PC-9 (cell line): ENCODE measurements at regions of chr2 and their contacts with region 1.

Region 1: DNA sequence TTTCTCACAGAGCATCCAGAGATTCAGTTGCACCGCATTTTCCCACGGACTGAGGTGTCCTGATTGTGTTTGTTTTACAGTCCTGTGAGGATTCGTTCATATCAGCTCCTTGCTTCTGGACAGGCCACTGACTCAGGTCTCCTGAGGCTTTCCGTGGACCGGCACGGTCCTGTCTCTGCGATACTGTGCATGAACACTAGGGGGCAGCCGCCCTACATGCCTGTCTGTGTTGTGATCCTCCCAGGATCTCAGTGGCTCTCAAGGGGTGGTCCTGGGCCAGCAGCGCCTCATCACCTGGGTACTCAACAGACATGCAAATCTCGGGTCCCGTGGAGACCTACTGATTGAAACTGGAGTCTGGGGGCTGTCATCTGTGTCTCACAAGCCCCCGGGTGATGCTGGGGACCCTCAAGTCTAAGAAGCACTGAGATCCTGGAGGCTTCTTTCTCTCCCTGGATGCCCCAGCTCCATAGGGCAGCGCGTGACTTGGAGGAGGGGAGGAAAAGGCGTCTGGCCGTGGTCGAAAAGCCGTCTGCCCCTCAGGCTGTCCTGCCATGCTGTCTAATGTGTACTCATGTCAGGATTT is 28.9 kb downstream of the IL1R2 start:
- DNase-seq: peak; percentile 53 to 77
- H3K4me3 ChIP-seq: no peak overlapping the region
- H3K27ac ChIP-seq: no peak overlapping the region
- H3K4me1 ChIP-seq: 0 out of 2 replicates have a peak, but pooled peaks cover 4% of the 10 kb centered on the region
- H3K27me3 ChIP-seq: no peaks in the 10 kb centered on the region
- CTCF ChIP-seq: peak; percentile 98

Region 2: GRCh38 chr2:100427628-100428258 is 1592.9 kb before region 1 on chr2:
- CTCF ChIA-PET with region 1: no interaction called
- POLR2A ChIA-PET with region 1: no interaction called
- intact Hi-C with region 1: no loop called
- DNase-seq: peak in 1 of 2 experiments; percentile 38
- H3K4me3 ChIP-seq: no peak overlapping the region
- H3K27ac ChIP-seq: no peak overlapping the region
- H3K4me1 ChIP-seq: no peaks in the 10 kb centered on the region
- H3K27me3 ChIP-seq: peaks cover 41% of the 10 kb centered on the region; the same call in 1 of the 2 replicates
- CTCF ChIP-seq: peak; percentile 74

Region 3: GRCh38 chr2:101793277-101793969 is 227.3 kb before region 1 on chr2:
- CTCF ChIA-PET with region 1: no interaction called
- POLR2A ChIA-PET with region 1: no interaction called
- intact Hi-C with region 1: no loop called
- DNase-seq: no peak
- H3K4me3 ChIP-seq: no peak overlapping the region
- H3K27ac ChIP-seq: no peak overlapping the region
- H3K4me1 ChIP-seq: peaks cover 17% of the 10 kb centered on the region
- H3K27me3 ChIP-seq: no peaks in the 10 kb centered on the region
- CTCF ChIP-seq: no peak

Region 4: GRCh38 chr2:102100295-102101096 is 79.8 kb after region 1 on chr2:
- CTCF ChIA-PET with region 1: no interaction called
- POLR2A ChIA-PET with region 1: no interaction called
- intact Hi-C with region 1: loop called (anchors 1 kb)
- DNase-seq: peak; percentile 24 to 97
- H3K4me3 ChIP-seq: no peak overlapping the region
- H3K27ac ChIP-seq: peak overlapping the region; percentile 84
- H3K4me1 ChIP-seq: peaks cover 45% of the 10 kb centered on the region
- H3K27me3 ChIP-seq: no peaks in the 10 kb centered on the region
- CTCF ChIP-seq: no peak

Region 5: GRCh38 chr2:102166189-102166845 is 145.6 kb after region 1 on chr2:
- CTCF ChIA-PET with region 1: interaction called, 10 read pairs
- POLR2A ChIA-PET with region 1: no interaction called
- intact Hi-C with region 1: loop called (anchors 1 kb)
- DNase-seq: no peak
- H3K4me3 ChIP-seq: no peak overlapping the region
- H3K27ac ChIP-seq: no peak overlapping the region
- H3K4me1 ChIP-seq: peaks cover 17% of the 10 kb centered on the region
- H3K27me3 ChIP-seq: no peaks in the 10 kb centered on the region
- CTCF ChIP-seq: peak; percentile 60

Region 6: GRCh38 chr2:102585847-102586431 is 565.2 kb after region 1 on chr2:
- CTCF ChIA-PET with region 1: interaction called, 10 read pairs
- POLR2A ChIA-PET with region 1: no interaction called
- intact Hi-C with region 1: no loop called
- DNase-seq: peak; percentile 62 to 81
- H3K4me3 ChIP-seq: no peak overlapping the region
- H3K27ac ChIP-seq: peak overlapping the region; percentile 4; the same call in 1 of the 2 replicates
- H3K4me1 ChIP-seq: peaks cover 20% of the 10 kb centered on the region
- H3K27me3 ChIP-seq: no peaks in the 10 kb centered on the region
- CTCF ChIP-seq: no peak